Psoas muscle (tissue), 8 donors: ENCODE measurements at regions of chr9 and their contacts with region 1.

Region 1: GRCh38 chr9:126228781-126229444 is 97.7 kb upstream of the MVB12B start:
- DNase-seq: peak; percentile 67 to 76
- ATAC-seq: peak; percentile 80 to 92 (median 88)
- H3K4me3 ChIP-seq: no peak overlapping the region
- H3K27ac ChIP-seq: no peak overlapping the region
- H3K4me1 ChIP-seq: no peaks in the 10 kb centered on the region
- H3K27me3 ChIP-seq: peaks cover 0 to 20% (median 6%) of the 10 kb centered on the region in 3 donors
- CTCF ChIP-seq: peak; percentile 91

Region 2: DNA sequence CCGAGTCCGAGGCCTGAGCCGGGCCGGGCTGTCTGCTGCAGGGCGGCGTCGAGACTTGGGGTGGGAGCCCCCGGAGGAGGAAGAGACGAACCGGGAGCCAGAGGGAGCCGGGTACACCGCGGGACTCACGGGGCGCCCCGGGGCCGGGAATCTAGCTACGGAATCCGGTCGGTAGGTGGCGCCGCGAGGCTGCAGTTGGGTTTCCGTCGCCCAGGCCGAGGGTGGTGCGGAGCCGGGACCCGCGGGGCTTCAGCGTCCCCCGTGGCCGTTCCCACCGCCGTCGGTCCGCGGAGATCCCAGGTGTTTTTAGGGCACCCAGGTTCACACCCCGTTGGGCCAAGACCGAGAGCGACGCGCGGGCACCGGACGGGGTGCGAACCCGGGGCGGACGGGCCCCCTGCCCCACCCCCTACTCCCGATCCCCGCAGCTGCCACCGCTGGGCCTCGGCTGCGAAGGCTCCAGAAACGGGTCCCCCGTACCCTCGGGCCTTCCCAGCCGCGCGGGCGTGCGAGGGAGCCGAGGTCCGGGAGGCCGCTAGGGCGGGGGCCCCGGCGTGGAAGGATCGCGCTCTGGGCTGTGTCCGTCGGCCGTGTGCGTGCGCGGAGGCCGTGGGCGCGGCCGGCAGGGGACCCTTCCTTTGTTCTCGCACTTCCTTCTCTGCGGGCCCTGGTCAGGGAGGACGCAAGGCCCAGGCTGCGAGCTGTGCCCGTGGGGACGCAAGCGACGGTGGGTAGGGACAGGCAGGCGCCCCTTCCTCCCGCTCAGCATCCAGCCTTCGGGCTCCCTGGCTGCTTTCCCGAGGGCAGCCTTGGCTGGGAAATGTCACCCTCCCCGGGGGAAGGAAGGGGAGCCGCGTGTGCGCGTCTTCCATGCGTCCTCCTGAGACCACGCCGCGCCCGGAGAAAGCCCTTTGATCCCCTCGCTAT is 820.7 kb before region 1 on chr9:
- intact Hi-C with region 1: loop called (anchors 1 to 5 kb)
- DNase-seq: peak; percentile 83 to 86
- ATAC-seq: peak; percentile 76 to 91 (median 86)
- H3K4me3 ChIP-seq: peak overlapping the region; percentile 68
- H3K27ac ChIP-seq: no peak overlapping the region
- H3K4me1 ChIP-seq: peaks cover 3% of the 10 kb centered on the region
- H3K27me3 ChIP-seq: peaks cover 0 to 17% (median 4%) of the 10 kb centered on the region in 3 donors
- CTCF ChIP-seq: peak; percentile 74